ENCODE measurements at regions of chr4 and their contacts with region 1.

Region 1: DNA sequence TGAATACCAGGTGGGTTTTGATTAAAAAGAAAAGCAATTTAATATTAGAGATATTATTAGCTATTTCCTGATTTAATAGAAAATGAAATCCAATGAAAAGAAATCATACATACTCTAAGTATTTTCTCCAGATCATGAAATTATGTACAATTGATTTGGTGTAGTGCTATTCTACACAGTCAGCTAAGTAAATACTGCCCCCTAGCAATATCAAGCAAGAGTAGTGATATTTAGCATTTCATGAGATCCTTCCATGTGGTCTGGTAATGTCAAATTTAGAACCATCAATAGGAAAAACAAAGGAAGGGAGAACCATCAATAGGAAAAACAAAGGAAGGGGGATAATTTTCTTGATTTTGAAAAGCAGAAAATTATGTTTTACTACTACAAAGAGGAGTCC is 114.6 kb downstream of the TBCK start:
- DNase-seq: no peak

Region 2: DNA sequence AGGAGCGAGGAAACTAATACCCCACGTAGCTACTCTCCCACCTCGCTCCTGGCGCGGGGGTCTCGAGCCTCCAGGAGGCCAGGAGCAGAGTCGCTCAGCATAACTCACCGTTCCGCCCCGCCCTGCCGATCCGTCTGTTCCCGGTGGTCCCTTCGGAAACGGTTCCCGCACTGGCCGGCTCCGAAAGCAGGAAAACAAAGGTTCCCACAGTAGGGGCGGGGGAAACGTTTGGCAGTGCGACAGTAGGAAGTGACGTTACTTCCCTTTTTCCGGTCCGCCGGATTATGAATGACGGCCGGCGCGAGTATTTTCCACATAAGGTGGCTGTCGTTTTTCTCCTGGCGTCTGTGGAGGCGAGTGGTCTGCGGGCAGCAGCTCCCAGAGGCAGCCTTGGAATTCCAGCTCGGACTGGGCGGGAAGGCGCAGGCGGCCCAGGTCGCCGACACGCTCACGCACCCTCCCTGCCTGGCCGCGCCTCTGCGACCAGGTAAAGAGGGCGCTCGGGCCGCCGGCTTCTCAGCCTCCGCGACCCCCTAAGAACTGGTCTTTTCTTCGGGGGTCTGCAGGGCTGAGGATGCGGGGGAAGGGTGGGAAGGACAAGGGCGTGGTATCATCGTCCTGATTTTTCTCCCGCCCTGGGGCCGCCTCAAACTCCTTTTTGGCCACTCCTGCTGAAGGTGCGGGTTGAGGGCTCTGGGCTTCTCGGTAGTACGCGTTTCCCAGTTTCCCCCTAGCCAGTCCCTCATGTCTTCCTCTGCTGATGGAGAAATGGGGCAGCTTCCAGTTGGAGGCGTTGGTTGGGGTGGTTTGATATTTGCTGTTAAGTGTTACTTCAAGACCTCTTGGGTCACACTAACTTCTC is 492.6 kb before region 1 on chr4 and contains the starts of genes GSTCD and INTS12:
- intact Hi-C with region 1: loop called (anchors 5 kb)
- DNase-seq: peak; percentile 95
- total RNA-seq, gene GSTCD: 4.8 TPM
- total RNA-seq, gene INTS12: 19.3 TPM